ENCODE measurements at regions of chr2 and their contacts with region 1.

Region 1: GRCh38 chr2:113602869-113603466 is 24.1 kb upstream of the RABL2A start:
- DNase-seq: no peak
- H3K4me3 ChIP-seq: peak overlapping the region; percentile 72
- H3K27ac ChIP-seq: peak overlapping the region; percentile 56
- H3K4me1 ChIP-seq: peaks cover 5% of the 10 kb centered on the region
- CTCF ChIP-seq: no peak

Region 2: DNA sequence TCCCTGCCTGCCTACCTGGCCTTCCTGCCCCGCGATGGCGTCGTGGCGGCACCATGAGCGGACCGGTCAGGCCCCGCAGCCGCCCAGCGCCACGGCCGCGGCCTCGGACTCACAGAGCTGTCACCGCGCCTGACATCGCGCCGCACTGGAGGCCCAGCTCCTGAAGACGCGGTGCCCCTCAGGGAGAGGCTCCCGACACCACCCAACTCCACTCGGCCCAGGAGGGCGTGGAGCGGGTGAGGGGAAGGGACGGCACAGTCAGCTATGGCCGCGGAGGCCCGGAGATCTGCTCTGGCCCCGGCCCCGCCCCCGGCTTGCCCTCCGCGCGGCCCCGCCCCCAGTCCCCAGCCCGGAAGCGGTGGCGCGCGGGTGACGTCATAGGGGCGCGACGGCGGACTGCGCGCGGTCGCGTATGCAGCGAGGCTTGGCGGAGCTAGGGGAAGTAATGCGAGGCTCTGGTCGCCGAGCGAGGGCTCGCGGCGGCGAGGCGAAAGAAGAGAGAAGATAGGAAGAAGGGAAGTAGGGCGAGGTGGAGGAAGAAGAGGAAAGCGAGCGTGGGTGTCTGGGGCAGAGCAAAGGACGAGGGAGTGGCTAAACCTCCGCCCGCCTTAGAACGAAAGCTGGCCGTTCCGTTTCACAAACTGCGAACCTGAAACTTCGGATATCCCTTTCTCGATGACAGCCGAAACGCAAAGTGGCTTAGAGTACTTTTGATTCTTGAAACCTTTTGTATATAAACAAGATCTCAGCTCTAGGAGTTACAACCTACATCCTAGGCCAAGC is 153.6 kb after region 1 on chr2 and contains the start of gene SLC35F5:
- CTCF ChIA-PET with region 1: no interaction called
- POLR2A ChIA-PET with region 1: no interaction called
- intact Hi-C with region 1: loop called (anchors 10 kb)
- DNase-seq: peak; percentile 95
- H3K4me3 ChIP-seq: peak within 1 kb of the TSS; percentile 89
- H3K27ac ChIP-seq: peak within 1 kb of the TSS; percentile 93
- H3K4me1 ChIP-seq: peaks cover 25% of the 10 kb centered on the region
- CTCF ChIP-seq: no peak
- total RNA-seq, gene SLC35F5: 45.4 and 51.1 TPM in 2 replicates

Region 3: GRCh38 chr2:114218383-114218782 is 615.4 kb after region 1 on chr2:
- CTCF ChIA-PET with region 1: no interaction called
- POLR2A ChIA-PET with region 1: no interaction called
- intact Hi-C with region 1: no loop called
- DNase-seq: no peak
- H3K4me3 ChIP-seq: no peak overlapping the region
- H3K27ac ChIP-seq: no peak overlapping the region
- H3K4me1 ChIP-seq: no peaks in the 10 kb centered on the region
- CTCF ChIP-seq: no peak